GM12878 (cell line): ENCODE measurements at regions of chr3 and their contacts with region 1.

Region 1: GRCh38 chr3:113275929-113276750 is 64.8 kb downstream of the BOC start:
- DNase-seq: peak; percentile 25
- ATAC-seq: peak; percentile 87
- H3K4me3 ChIP-seq: peak overlapping the region; percentile 31; the same call in 1 of the 2 replicates
- H3K27ac ChIP-seq: peak overlapping the region; percentile 60
- H3K4me1 ChIP-seq: peaks cover 32% of the 10 kb centered on the region
- H3K27me3 ChIP-seq: no peaks in the 10 kb centered on the region
- CTCF ChIP-seq: no peak
- EP300 ChIP-seq: no peak
- POLR2A ChIP-seq: no peak
- RAD21 ChIP-seq: no peak

Region 2: GRCh38 chr3:113136071-113136470 is 140.1 kb before region 1 on chr3:
- CTCF ChIA-PET with region 1: interaction called, 6 read pairs
- POLR2A ChIA-PET with region 1: no interaction called
- RAD21 ChIA-PET with region 1: interaction called, 3 read pairs
- SMC1A ChIA-PET with region 1: interaction called, 3 read pairs
- in situ Hi-C with region 1: loop called (anchors 5 kb)
- intact Hi-C with region 1: no loop called
- DNase-seq: no peak
- ATAC-seq: 0 out of 3 replicates have a peak, but pooled peaks have one; percentile 31
- H3K4me3 ChIP-seq: no peak overlapping the region
- H3K27ac ChIP-seq: no peak overlapping the region
- H3K4me1 ChIP-seq: no peaks in the 10 kb centered on the region
- H3K27me3 ChIP-seq: no peaks in the 10 kb centered on the region
- CTCF ChIP-seq: peak; percentile 40 to 42 (median 42); a peak in 4 of 6 replicates
- EP300 ChIP-seq: no peak
- POLR2A ChIP-seq: no peak
- RAD21 ChIP-seq: peak; percentile 40; the same call in 1 of the 2 replicates

Region 3: GRCh38 chr3:113297287-113297686 is 21.1 kb after region 1 on chr3:
- CTCF ChIA-PET with region 1: no interaction called
- POLR2A ChIA-PET with region 1: no interaction called
- RAD21 ChIA-PET with region 1: no interaction called
- SMC1A ChIA-PET with region 1: no interaction called
- in situ Hi-C with region 1: no loop called
- intact Hi-C with region 1: no loop called
- DNase-seq: no peak
- ATAC-seq: no peak
- H3K4me3 ChIP-seq: no peak overlapping the region
- H3K27ac ChIP-seq: no peak overlapping the region
- H3K4me1 ChIP-seq: no peaks in the 10 kb centered on the region
- H3K27me3 ChIP-seq: no peaks in the 10 kb centered on the region
- CTCF ChIP-seq: no peak
- EP300 ChIP-seq: no peak
- POLR2A ChIP-seq: no peak
- RAD21 ChIP-seq: no peak

Region 4: GRCh38 chr3:113312416-113312815 is 36.3 kb after region 1 on chr3:
- CTCF ChIA-PET with region 1: no interaction called
- POLR2A ChIA-PET with region 1: no interaction called
- RAD21 ChIA-PET with region 1: no interaction called
- SMC1A ChIA-PET with region 1: no interaction called
- in situ Hi-C with region 1: no loop called
- intact Hi-C with region 1: no loop called
- DNase-seq: no peak
- ATAC-seq: no peak
- H3K4me3 ChIP-seq: no peak overlapping the region
- H3K27ac ChIP-seq: no peak overlapping the region
- H3K4me1 ChIP-seq: no peaks in the 10 kb centered on the region
- H3K27me3 ChIP-seq: no peaks in the 10 kb centered on the region
- CTCF ChIP-seq: no peak
- EP300 ChIP-seq: no peak
- POLR2A ChIP-seq: no peak
- RAD21 ChIP-seq: no peak

Region 5: GRCh38 chr3:113594066-113594465 is 317.9 kb after region 1 on chr3:
- CTCF ChIA-PET with region 1: no interaction called
- POLR2A ChIA-PET with region 1: no interaction called
- RAD21 ChIA-PET with region 1: no interaction called
- SMC1A ChIA-PET with region 1: no interaction called
- in situ Hi-C with region 1: no loop called
- intact Hi-C with region 1: no loop called
- DNase-seq: no peak
- ATAC-seq: no peak
- H3K4me3 ChIP-seq: no peak overlapping the region
- H3K27ac ChIP-seq: no peak overlapping the region
- H3K4me1 ChIP-seq: no peaks in the 10 kb centered on the region
- H3K27me3 ChIP-seq: no peaks in the 10 kb centered on the region
- CTCF ChIP-seq: no peak
- EP300 ChIP-seq: no peak
- POLR2A ChIP-seq: no peak
- RAD21 ChIP-seq: no peak